SK-N-SH (cell line): ENCODE measurements at regions of chr5 and their contacts with region 1.

Region 1: DNA sequence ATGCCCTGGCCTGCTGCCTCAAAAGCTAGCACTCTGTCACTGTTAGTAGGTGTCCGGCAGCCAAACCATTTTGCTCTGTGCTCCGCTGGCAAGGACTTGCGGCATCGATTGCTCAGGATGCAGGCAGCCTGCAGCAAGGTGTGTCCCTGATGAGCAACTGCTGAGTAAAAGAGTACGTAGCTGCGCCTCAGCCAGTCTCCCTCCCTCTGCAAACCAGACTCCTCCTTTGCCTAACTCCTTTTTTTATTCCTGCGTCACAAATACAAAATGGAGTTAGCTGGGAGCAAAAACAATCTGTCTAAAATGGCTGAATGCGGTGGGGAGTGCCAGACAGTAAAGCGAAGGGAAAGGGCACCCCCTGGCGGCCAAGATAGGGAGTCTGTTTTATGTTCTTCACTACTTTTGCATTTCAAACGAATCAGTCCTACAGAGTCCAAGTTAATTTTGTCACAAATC is 61.1 kb downstream of the DIAPH1 start:
- DNase-seq: peak; percentile 69
- H3K4me3 ChIP-seq: peak overlapping the region; percentile 34 to 39; a peak in 3 of 4 replicates
- H3K27ac ChIP-seq: peak overlapping the region; percentile 91 to 100
- H3K4me1 ChIP-seq: peaks cover 21 to 23% of the 10 kb centered on the region in 2 experiments; a peak in 3 of 4 replicates
- H3K27me3 ChIP-seq: no peaks in the 10 kb centered on the region
- CTCF ChIP-seq: peak; percentile 93
- EP300 ChIP-seq: peak; percentile 28 to 48; a peak in 3 of 4 replicates
- RAD21 ChIP-seq: peak; percentile 96

Region 2: DNA sequence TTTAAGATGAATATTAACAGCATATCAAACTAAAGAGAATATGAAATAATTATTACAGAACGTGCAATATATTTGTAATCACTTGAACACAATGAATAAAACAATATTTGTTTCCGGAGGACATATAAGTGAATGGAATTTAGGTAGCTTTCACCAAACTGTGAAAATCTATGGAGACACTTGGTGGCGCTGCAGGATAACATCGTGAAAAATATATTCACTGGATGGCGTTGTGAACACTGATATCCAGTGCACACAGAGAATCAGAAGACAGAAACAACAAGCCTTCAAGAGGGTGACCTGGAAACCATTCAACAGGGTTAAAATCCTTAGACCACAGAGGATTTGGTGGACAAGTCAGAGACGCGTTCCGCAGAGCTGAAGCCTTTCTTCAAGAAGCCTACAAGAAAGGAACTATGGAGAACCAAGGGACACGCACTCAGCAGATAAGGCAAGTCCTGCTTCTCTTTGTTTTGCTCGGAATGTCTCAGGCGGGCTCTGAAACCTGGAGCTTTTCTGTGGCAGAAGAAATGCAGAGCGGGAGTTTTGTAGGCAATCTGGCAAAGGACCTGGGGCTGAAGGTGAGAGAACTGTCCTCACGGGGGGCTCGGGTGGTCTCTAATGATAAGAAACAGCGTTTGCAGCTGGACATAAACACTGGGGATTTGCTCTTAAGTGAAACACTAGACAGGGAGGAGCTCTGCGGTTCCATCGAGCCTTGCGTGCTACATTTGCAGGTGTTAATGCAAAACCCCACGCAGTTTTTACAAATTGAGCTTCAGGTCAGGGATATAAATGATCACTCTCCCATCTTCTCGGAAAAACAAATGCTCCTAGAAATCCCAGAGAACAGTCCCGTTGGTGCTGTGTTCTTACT is 358.1 kb before region 1 on chr5 and contains the start of gene PCDHB11:
- CTCF ChIA-PET with region 1: interaction called, 15 read pairs
- POLR2A ChIA-PET with region 1: no interaction called
- DNase-seq: peak; percentile 41
- H3K4me3 ChIP-seq: peak within 1 kb of the TSS; percentile 18 to 26; a peak in 2 of 4 replicates
- H3K27ac ChIP-seq: no peak within 1 kb of the TSS
- H3K4me1 ChIP-seq: no peaks in the 10 kb centered on the region
- H3K27me3 ChIP-seq: no peaks in the 10 kb centered on the region
- CTCF ChIP-seq: peak; percentile 39
- EP300 ChIP-seq: no peak
- RAD21 ChIP-seq: peak; percentile 48
- polyA plus RNA-seq, gene PCDHB11: 0.41 and 0.61 TPM in 2 replicates

Region 3: DNA sequence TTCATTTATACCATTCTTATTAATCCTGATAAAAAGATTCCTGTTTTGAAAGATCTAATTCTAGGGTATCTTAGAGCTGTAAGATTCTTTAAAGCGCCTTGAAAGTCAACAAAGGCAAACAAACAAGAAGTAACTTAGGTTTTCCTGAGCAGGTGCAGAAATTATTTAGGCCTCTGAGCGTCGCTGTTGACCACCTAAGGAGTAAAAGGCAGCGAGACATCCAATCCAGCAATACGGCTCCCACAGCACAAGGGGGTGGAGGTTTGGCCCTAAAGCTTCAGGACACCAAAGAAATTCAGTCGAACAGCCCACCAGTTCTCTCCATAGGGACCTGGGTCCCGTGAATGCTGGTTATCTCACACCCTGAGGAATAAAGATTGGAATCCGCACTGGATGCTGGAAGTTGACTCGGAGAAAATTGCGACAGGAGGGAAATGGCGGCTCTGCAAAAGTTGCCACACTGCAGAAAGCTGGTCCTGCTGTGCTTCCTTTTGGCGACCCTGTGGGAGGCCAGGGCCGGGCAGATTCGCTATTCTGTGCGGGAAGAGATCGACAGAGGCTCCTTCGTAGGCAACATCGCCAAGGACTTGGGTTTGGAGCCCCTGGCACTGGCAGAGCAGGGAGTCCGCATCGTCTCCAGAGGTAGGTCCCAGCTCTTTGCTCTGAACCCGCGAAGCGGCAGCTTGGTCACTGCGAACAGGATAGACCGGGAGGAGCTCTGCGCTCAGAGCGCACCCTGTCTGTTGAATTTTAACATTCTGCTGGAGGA is 219.0 kb before region 1 on chr5 and contains the start of gene PCDHGA2:
- CTCF ChIA-PET with region 1: interaction called, 11 read pairs
- POLR2A ChIA-PET with region 1: no interaction called
- DNase-seq: peak; percentile 46
- H3K4me3 ChIP-seq: peak within 1 kb of the TSS in 1 of 2 experiments; percentile 17; a peak in 1 of 4 replicates
- H3K27ac ChIP-seq: no peak within 1 kb of the TSS
- H3K4me1 ChIP-seq: no peaks in the 10 kb centered on the region
- H3K27me3 ChIP-seq: no peaks in the 10 kb centered on the region
- CTCF ChIP-seq: peak; percentile 43
- EP300 ChIP-seq: no peak
- RAD21 ChIP-seq: peak; percentile 47
- polyA plus RNA-seq, gene PCDHGA2: 1.4 and 1.5 TPM in 2 replicates

Region 4: DNA sequence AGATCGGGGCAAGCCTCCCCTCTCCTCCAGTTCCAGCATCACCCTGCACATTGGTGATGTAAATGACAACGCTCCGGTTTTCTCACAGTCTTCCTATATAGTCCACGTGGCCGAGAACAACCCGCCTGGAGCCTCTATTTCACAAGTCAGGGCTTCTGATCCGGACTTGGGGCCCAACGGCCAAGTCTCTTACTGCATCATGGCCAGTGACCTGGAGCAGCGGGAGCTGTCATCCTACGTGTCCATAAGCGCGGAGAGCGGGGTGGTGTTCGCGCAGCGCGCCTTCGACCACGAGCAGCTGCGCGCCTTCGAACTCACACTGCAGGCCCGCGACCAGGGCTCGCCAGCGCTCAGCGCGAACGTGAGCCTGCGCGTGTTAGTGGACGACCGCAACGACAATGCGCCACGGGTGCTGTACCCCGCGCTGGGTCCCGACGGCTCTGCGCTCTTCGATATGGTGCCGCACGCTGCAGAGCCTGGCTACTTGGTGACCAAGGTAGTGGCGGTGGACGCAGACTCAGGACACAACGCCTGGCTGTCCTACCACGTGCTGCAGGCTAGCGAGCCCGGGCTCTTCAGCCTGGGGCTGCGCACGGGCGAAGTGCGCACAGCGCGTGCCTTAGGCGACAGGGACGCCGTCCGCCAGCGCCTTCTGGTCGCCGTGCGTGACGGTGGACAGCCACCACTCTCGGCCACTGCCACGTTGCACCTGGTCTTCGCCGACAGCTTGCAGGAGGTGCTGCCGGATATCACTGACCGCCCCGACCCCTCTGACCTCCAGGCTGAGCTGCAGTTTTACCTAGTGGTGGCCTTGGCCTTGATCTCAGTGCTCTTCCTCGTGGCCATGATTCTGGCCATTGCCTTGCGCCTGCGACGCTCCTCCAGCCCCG is 168.3 kb before region 1 on chr5:
- CTCF ChIA-PET with region 1: interaction called, 11 read pairs
- POLR2A ChIA-PET with region 1: no interaction called
- DNase-seq: no peak
- H3K4me3 ChIP-seq: no peak overlapping the region; a peak in 1 of 4 replicates
- H3K27ac ChIP-seq: no peak overlapping the region
- H3K4me1 ChIP-seq: no peaks in the 10 kb centered on the region
- H3K27me3 ChIP-seq: no peaks in the 10 kb centered on the region
- CTCF ChIP-seq: no peak
- EP300 ChIP-seq: no peak
- RAD21 ChIP-seq: no peak

Region 5: DNA sequence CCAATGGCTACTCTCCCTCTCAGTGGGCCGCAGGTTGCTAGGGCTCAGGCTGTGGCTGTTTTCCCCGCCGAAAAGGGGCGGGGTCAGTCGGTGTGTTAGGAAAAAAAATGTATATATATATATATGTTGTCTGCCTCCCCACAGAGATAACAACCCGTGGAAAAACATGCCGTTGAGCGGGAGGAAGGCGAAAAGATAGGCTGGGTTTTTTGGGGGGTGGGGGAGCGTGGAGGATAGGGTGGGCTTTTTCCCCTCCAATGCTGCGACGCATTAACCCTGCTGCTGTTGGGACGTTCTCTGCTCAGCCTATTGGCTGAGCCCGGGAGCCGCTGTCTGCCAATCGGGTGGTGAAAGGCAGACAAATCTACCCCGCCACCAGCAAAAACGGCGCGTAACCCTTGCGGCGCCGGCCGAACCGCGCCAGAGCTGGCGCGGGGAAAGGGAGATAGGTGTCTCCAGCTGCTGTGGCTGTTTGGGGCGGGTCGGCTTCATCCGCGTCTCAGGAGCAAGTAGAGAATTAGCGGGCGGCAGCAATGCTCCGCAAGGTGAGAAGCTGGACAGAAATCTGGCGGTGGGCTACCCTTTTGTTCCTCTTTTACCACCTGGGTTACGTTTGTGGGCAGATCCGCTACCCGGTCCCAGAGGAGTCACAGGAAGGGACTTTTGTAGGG is 72.9 kb before region 1 on chr5 and contains the start of gene PCDHGC4:
- CTCF ChIA-PET with region 1: interaction called, 25 read pairs
- POLR2A ChIA-PET with region 1: interaction called, 8 read pairs
- DNase-seq: peak; percentile 91
- H3K4me3 ChIP-seq: peak within 1 kb of the TSS in 1 of 2 experiments; percentile 42; a peak in 2 of 4 replicates
- H3K27ac ChIP-seq: peak within 1 kb of the TSS; percentile 11 to 91; a peak in 3 of 4 replicates
- H3K4me1 ChIP-seq: peaks cover 30 to 44% of the 10 kb centered on the region in 2 experiments
- H3K27me3 ChIP-seq: no peaks in the 10 kb centered on the region
- CTCF ChIP-seq: no peak
- EP300 ChIP-seq: no peak
- RAD21 ChIP-seq: 0 out of 2 replicates have a peak, but pooled peaks have one; percentile 2
- polyA plus RNA-seq, gene PCDHGC4: 0.53 and 0.78 TPM in 2 replicates

Region 6: GRCh38 chr5:141524604-141525597 is 32.8 kb before region 1 on chr5:
- CTCF ChIA-PET with region 1: interaction called, 191 read pairs
- POLR2A ChIA-PET with region 1: interaction called, 7 read pairs
- DNase-seq: peak; percentile 79
- H3K4me3 ChIP-seq: peak overlapping the region; percentile 23 to 52; a peak in 3 of 4 replicates
- H3K27ac ChIP-seq: peak overlapping the region; percentile 99 to 100
- H3K4me1 ChIP-seq: peaks cover 36 to 70% of the 10 kb centered on the region in 2 experiments
- H3K27me3 ChIP-seq: no peaks in the 10 kb centered on the region
- CTCF ChIP-seq: peak; percentile 100
- EP300 ChIP-seq: peak; percentile 81 to 86; a peak in 3 of 4 replicates
- RAD21 ChIP-seq: peak; percentile 98

Region 7: GRCh38 chr5:141664732-141665461 is 107.2 kb after region 1 on chr5:
- CTCF ChIA-PET with region 1: no interaction called
- POLR2A ChIA-PET with region 1: no interaction called
- DNase-seq: peak; percentile 90
- H3K4me3 ChIP-seq: no peak overlapping the region; a peak in 1 of 4 replicates
- H3K27ac ChIP-seq: no peak overlapping the region
- H3K4me1 ChIP-seq: no peaks in the 10 kb centered on the region; a peak in 1 of 4 replicates
- H3K27me3 ChIP-seq: no peaks in the 10 kb centered on the region
- CTCF ChIP-seq: peak; percentile 89
- EP300 ChIP-seq: no peak
- RAD21 ChIP-seq: peak; percentile 83

Region 8: GRCh38 chr5:141908796-141909195 is 351.1 kb after region 1 on chr5:
- CTCF ChIA-PET with region 1: no interaction called
- POLR2A ChIA-PET with region 1: no interaction called
- DNase-seq: no peak
- H3K4me3 ChIP-seq: no peak overlapping the region
- H3K27ac ChIP-seq: no peak overlapping the region
- H3K4me1 ChIP-seq: peaks cover 0 to 4% of the 10 kb centered on the region in 2 experiments; a peak in 1 of 4 replicates
- H3K27me3 ChIP-seq: no peaks in the 10 kb centered on the region
- CTCF ChIP-seq: no peak
- EP300 ChIP-seq: no peak
- RAD21 ChIP-seq: no peak

Region 9: GRCh38 chr5:142726188-142726731 is 1168.6 kb after region 1 on chr5:
- CTCF ChIA-PET with region 1: no interaction called
- POLR2A ChIA-PET with region 1: no interaction called
- DNase-seq: no peak
- H3K4me3 ChIP-seq: no peak overlapping the region
- H3K27ac ChIP-seq: peak overlapping the region; percentile 43 to 98; a peak in 3 of 4 replicates
- H3K4me1 ChIP-seq: peaks cover 0 to 25% of the 10 kb centered on the region in 2 experiments
- H3K27me3 ChIP-seq: no peaks in the 10 kb centered on the region
- CTCF ChIP-seq: no peak
- EP300 ChIP-seq: peak; percentile 59 to 61; a peak in 3 of 4 replicates
- RAD21 ChIP-seq: no peak